ENCODE measurements at regions of chr11 and their contacts with region 1.

Region 1: GRCh38 chr11:67630228-67630942 is 648 bp upstream of the NUDT8 start:
- DNase-seq: peak; percentile 99 to 100
- ATAC-seq: peak; percentile 95
- H3K4me3 ChIP-seq: peak overlapping the region; percentile 29 to 51
- H3K27ac ChIP-seq: peak overlapping the region in 1 of 2 donors; percentile 35
- H3K4me1 ChIP-seq: no peaks in the 10 kb centered on the region
- H3K27me3 ChIP-seq: no peaks in the 10 kb centered on the region

Region 2: DNA sequence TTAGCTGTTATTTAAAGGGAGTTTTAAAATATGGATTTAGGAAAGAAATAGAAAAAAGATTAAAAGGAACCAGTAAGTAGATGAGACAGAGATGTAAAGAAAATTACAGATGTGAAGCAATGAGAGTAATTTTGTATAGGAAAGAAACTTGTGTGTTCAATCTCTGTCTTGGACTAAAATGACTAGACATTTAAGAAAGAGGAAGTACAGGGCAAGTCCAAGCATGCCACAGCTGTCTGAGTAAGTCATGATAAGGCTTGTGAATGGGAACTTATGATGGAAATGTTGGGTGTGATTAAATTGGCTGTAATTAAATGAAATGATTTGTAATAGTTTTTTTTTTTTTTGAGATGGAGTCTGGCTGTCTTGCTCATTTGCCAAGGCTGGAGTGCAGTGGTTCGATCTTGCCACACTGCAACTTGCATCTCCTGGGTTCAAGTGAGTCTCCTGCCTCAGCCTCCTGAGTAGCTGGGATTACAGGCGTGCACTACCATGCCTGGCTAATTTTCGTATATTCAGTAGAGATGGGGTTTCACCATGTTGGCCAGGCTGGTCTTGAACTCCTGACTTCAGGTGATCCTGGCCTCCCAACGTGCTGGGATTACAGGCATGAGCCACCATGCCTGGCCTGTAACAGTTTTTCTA is 26.0 kb after region 1 on chr11:
- intact Hi-C with region 1: loop called (anchors 1 to 2 kb)
- DNase-seq: no peak
- ATAC-seq: no peak
- H3K4me3 ChIP-seq: no peak overlapping the region
- H3K27ac ChIP-seq: no peak overlapping the region
- H3K4me1 ChIP-seq: no peaks in the 10 kb centered on the region
- H3K27me3 ChIP-seq: no peaks in the 10 kb centered on the region

Measured in aorta (tissue), 5 donors.